Activated CD8-positive, alpha-beta T cell treated with anti-CD3 and anti-CD28 coated beads, Interleukin-2, amount 10 ng/mL, durations not matched to agents 7 days and 5 days (primary cell): ENCODE measurements at regions of chr2 and their contacts with region 1.

Region 1: GRCh38 chr2:222707689-222708525 is 36.4 kb downstream of the MOGAT1 start:
- DNase-seq: peak; percentile 81
- ATAC-seq: peak; percentile 70
- H3K4me3 Mint-ChIP-seq: no peak overlapping the region
- H3K27ac Mint-ChIP-seq: no peak overlapping the region
- H3K4me1 Mint-ChIP-seq: peaks cover 25% of the 10 kb centered on the region
- H3K27me3 Mint-ChIP-seq: peaks cover 35% of the 10 kb centered on the region

Region 2: DNA sequence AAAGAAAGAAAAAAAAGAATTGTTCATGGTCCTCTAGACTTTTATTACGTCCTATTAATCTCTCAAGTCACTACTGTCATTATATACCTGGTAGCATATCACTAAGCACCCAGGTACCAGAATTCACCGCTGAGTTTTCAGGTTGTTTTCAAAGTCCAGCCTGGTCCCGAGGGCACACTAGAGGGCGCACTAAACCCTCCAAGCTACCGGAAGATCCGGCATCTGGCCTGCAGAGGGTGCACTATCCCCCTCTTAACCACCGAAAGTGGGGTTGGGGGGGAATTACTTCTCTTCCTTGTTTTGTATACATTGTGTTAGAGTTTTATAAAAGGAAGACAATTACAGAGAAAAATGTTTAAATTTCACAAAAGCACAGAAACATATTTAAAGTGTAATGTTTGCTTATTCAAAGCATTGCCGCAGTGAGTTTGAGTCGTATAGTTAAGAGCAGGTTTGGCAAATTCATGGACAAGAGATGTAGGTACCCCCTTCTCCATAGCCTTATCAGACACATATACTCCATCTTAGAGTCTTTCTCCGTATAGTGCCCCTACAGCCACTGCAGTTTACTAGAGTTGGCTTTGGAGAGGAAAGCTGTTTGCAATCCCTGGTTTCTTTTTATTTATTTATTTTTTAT is 17.2 kb before region 1 on chr2:
- CTCF ChIA-PET with region 1: interaction called, 24 read pairs
- POLR2A ChIA-PET with region 1: no interaction called
- DNase-seq: peak; percentile 87
- ATAC-seq: peak; percentile 93
- H3K4me3 Mint-ChIP-seq: no peak overlapping the region
- H3K27ac Mint-ChIP-seq: no peak overlapping the region
- H3K4me1 Mint-ChIP-seq: peaks cover 17% of the 10 kb centered on the region
- H3K27me3 Mint-ChIP-seq: peaks cover 28% of the 10 kb centered on the region

Region 3: DNA sequence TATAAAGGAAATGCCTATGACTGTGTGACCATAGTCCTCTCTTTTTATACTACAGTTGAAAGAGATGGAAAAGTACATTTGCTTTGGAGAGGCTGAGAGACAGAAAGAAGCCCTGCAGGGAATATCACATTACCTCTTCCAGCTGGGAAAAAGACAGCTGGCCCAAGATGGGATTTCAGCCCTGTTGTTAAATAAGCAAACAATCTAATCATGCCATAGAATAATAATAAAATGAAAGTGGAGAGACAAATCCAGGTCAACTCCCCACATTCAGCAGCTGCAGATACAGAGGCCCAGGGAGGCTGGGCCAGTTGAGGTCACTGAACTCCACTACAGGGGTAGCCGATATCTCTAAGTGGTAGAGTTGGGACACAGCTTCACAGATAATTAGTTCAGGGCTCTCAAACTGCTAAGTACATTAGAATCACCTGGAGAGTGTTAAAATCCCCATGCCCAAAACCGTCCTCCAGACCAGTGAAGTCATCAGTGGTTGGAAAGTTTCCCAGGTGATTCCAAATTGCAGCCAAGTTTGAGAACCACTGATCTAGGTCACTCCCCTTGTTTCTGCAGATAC is 45.4 kb after region 1 on chr2:
- CTCF ChIA-PET with region 1: interaction called, 11 read pairs
- POLR2A ChIA-PET with region 1: interaction called, 3 read pairs
- DNase-seq: no peak
- ATAC-seq: no peak
- H3K4me3 Mint-ChIP-seq: no peak overlapping the region
- H3K27ac Mint-ChIP-seq: no peak overlapping the region
- H3K4me1 Mint-ChIP-seq: peaks cover 34% of the 10 kb centered on the region
- H3K27me3 Mint-ChIP-seq: peaks cover 21% of the 10 kb centered on the region

Region 4: DNA sequence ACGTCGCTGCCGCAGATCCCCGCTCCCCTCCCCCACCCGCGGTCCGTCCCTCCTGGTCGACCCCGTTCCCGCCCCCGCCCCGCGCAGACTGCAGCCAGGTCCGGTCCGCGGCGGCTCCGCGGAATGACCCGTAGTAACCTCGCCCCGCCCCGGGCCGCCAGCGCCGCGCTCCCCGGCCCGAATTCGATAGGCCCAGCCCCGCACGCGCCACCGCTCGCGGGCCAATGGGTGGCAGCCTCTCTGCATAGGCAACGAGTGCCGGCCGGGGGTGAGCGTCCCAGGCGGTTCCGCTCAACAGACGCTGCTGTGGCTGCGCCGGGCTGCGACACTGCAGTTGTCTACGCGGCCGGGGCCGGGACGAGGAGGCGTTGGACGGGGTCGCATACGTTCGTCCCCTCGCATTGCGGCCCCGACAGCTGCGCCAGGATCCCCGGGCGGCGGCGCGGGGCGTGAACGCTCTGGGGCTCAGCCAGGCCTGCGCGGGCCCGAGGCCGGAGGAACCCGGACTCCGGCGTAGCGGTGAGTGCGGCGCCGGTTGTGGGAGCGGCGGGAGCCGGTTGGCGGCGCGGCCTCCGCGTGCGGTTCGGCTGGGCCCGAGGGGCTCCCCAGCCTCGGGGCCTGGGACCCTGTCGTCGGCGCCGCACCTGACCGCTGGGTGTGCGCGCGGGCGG is 153.0 kb after region 1 on chr2 and contains the start of gene ACSL3:
- CTCF ChIA-PET with region 1: interaction called, 28 read pairs
- POLR2A ChIA-PET with region 1: no interaction called
- DNase-seq: peak; percentile 95
- ATAC-seq: peak; percentile 99
- H3K4me3 Mint-ChIP-seq: peak within 1 kb of the TSS; percentile 73
- H3K27ac Mint-ChIP-seq: peak within 1 kb of the TSS; percentile 90
- H3K4me1 Mint-ChIP-seq: peaks cover 6% of the 10 kb centered on the region
- H3K27me3 Mint-ChIP-seq: peaks cover 16% of the 10 kb centered on the region
- total RNA-seq, gene ACSL3: 46.5 to 54.6 TPM

Region 5: GRCh38 chr2:222903234-222904220 is 195.6 kb after region 1 on chr2:
- CTCF ChIA-PET with region 1: interaction called, 38 read pairs
- POLR2A ChIA-PET with region 1: no interaction called
- DNase-seq: peak; percentile 54
- ATAC-seq: peak; percentile 76
- H3K4me3 Mint-ChIP-seq: no peak overlapping the region
- H3K27ac Mint-ChIP-seq: no peak overlapping the region
- H3K4me1 Mint-ChIP-seq: peaks cover 11% of the 10 kb centered on the region
- H3K27me3 Mint-ChIP-seq: no peaks in the 10 kb centered on the region

Region 6: GRCh38 chr2:222912117-222912516 is 204.2 kb after region 1 on chr2:
- CTCF ChIA-PET with region 1: interaction called, 27 read pairs
- POLR2A ChIA-PET with region 1: no interaction called
- DNase-seq: no peak
- ATAC-seq: no peak
- H3K4me3 Mint-ChIP-seq: no peak overlapping the region
- H3K27ac Mint-ChIP-seq: no peak overlapping the region
- H3K4me1 Mint-ChIP-seq: peaks cover 27% of the 10 kb centered on the region
- H3K27me3 Mint-ChIP-seq: no peaks in the 10 kb centered on the region

Region 7: GRCh38 chr2:222939208-222939856 is 231.4 kb after region 1 on chr2:
- CTCF ChIA-PET with region 1: interaction called, 22 read pairs
- POLR2A ChIA-PET with region 1: no interaction called
- DNase-seq: peak; percentile 81
- ATAC-seq: peak; percentile 96
- H3K4me3 Mint-ChIP-seq: no peak overlapping the region
- H3K27ac Mint-ChIP-seq: no peak overlapping the region
- H3K4me1 Mint-ChIP-seq: peaks cover 5% of the 10 kb centered on the region
- H3K27me3 Mint-ChIP-seq: no peaks in the 10 kb centered on the region